GM12878 (cell line): ENCODE measurements at regions of chr1 and their contacts with region 1.

Region 1: GRCh38 chr1:223233410-223234169 is 90.5 kb upstream of the TLR5 start:
- DNase-seq: no peak
- ATAC-seq: peak; percentile 89
- H3K4me3 ChIP-seq: no peak overlapping the region
- H3K27ac ChIP-seq: no peak overlapping the region
- H3K4me1 ChIP-seq: no peaks in the 10 kb centered on the region
- H3K27me3 ChIP-seq: no peaks in the 10 kb centered on the region; a peak in 1 of 4 replicates
- CTCF ChIP-seq: no peak
- EP300 ChIP-seq: 0 out of 4 replicates have a peak, but pooled peaks of 1 of the 2 experiments have one; percentile 16
- POLR2A ChIP-seq: no peak
- RAD21 ChIP-seq: no peak

Region 2: DNA sequence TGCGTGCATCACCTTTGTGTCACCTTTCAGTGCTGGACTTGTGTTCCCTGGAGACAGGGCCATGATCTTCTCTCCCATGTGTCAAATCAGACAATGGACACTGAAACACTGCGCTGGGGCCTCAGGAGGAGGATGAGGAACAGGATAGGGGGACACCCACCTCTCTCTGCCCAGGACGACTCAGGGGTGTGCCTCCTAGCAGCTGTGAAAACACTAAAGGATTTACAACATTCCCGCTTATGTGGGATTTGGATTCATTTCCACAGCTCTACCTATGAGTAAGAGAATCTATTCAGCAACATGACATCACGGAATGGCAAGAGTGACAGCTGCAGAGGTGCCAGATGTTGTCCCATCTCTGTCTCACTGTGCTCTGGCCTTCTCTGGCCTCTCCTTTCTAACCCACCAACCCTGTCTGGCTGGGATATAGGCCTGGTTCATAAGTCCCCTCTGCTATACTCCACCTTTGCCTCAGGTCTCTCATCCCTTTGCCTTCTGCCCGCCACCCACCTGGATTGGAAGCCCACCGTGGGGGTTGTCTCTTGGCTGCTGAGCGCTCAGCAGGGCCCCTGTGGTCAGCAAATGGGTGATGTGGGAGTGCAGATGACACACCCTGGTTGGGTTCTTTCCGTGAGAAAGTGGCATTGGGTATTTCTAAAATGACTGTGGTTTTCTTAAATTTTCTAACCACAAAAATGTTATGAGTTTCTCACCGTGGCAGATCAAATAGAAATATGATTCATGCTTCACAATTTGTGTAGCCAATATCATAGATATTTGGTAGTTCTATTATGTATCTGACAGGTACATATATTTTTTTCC is 43.5 kb before region 1 on chr1:
- CTCF ChIA-PET with region 1: interaction called, 3 read pairs
- POLR2A ChIA-PET with region 1: no interaction called
- RAD21 ChIA-PET with region 1: interaction called, 4 read pairs
- SMC1A ChIA-PET with region 1: interaction called, 7 read pairs
- in situ Hi-C with region 1: no loop called
- intact Hi-C with region 1: loop called (anchors 1 kb)
- DNase-seq: peak; percentile 30
- ATAC-seq: peak; percentile 90
- H3K4me3 ChIP-seq: no peak overlapping the region
- H3K27ac ChIP-seq: no peak overlapping the region
- H3K4me1 ChIP-seq: no peaks in the 10 kb centered on the region; the same call in 1 of the 2 replicates
- H3K27me3 ChIP-seq: no peaks in the 10 kb centered on the region
- CTCF ChIP-seq: no peak
- EP300 ChIP-seq: peak; percentile 77 to 91; a peak in 3 of 4 replicates
- POLR2A ChIP-seq: no peak
- RAD21 ChIP-seq: no peak

Region 3: GRCh38 chr1:223549740-223550139 is 316.1 kb after region 1 on chr1:
- CTCF ChIA-PET with region 1: no interaction called
- POLR2A ChIA-PET with region 1: no interaction called
- RAD21 ChIA-PET with region 1: no interaction called
- SMC1A ChIA-PET with region 1: no interaction called
- in situ Hi-C with region 1: no loop called
- intact Hi-C with region 1: no loop called
- DNase-seq: no peak
- ATAC-seq: peak; percentile 40
- H3K4me3 ChIP-seq: no peak overlapping the region
- H3K27ac ChIP-seq: no peak overlapping the region
- H3K4me1 ChIP-seq: peaks cover 20% of the 10 kb centered on the region
- H3K27me3 ChIP-seq: no peaks in the 10 kb centered on the region
- CTCF ChIP-seq: peak in 2 of 3 experiments; percentile 20 to 29; a peak in 2 of 6 replicates
- EP300 ChIP-seq: no peak
- POLR2A ChIP-seq: no peak
- RAD21 ChIP-seq: no peak